HCT116 (cell line): ENCODE measurements at regions of chr6 and their contacts with region 1.

Region 1: GRCh38 chr6:44431118-44431725 is 43.7 kb downstream of the CDC5L start:
- DNase-seq: peak; percentile 45
- ATAC-seq: peak; percentile 82
- H3K4me3 ChIP-seq: no peak overlapping the region
- H3K27ac ChIP-seq: no peak overlapping the region
- H3K4me1 ChIP-seq: peaks cover 3% of the 10 kb centered on the region in 2 experiments; a peak in 1 of 4 replicates
- H3K27me3 ChIP-seq: no peaks in the 10 kb centered on the region
- CTCF ChIP-seq: peak; percentile 51 to 78 (median 64); a peak in 5 of 6 replicates
- POLR2A ChIP-seq: no peak
- RAD21 ChIP-seq: peak; percentile 73

Region 2: DNA sequence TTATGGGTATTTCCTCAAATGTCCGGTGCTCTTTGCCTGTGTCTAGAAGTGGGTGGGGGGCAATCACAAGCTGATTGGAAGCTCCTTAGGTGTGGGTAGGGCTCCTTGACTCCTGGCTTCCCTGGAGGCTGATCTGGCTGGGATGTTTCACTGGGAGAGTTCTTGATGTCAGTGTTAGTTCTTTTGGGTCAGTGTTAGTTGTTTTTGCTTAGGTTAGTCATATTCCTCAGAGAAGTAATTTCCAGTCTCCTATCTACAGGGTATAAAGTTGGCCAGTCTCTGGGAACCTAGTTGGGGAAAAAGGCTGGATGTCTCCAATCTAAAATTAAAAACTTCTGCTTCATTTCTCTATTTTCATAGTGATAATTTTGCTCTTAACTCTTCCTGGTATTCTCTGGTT is 20.1 kb before region 1 on chr6:
- CTCF ChIA-PET with region 1: no interaction called
- POLR2A ChIA-PET with region 1: no interaction called
- RAD21 ChIA-PET with region 1: no interaction called
- intact Hi-C with region 1: no loop called
- DNase-seq: no peak
- ATAC-seq: no peak
- H3K4me3 ChIP-seq: no peak overlapping the region
- H3K27ac ChIP-seq: no peak overlapping the region
- H3K4me1 ChIP-seq: peaks cover 2 to 16% of the 10 kb centered on the region in 2 experiments; a peak in 2 of 4 replicates
- H3K27me3 ChIP-seq: no peaks in the 10 kb centered on the region
- CTCF ChIP-seq: no peak
- POLR2A ChIP-seq: no peak
- RAD21 ChIP-seq: no peak

Region 3: DNA sequence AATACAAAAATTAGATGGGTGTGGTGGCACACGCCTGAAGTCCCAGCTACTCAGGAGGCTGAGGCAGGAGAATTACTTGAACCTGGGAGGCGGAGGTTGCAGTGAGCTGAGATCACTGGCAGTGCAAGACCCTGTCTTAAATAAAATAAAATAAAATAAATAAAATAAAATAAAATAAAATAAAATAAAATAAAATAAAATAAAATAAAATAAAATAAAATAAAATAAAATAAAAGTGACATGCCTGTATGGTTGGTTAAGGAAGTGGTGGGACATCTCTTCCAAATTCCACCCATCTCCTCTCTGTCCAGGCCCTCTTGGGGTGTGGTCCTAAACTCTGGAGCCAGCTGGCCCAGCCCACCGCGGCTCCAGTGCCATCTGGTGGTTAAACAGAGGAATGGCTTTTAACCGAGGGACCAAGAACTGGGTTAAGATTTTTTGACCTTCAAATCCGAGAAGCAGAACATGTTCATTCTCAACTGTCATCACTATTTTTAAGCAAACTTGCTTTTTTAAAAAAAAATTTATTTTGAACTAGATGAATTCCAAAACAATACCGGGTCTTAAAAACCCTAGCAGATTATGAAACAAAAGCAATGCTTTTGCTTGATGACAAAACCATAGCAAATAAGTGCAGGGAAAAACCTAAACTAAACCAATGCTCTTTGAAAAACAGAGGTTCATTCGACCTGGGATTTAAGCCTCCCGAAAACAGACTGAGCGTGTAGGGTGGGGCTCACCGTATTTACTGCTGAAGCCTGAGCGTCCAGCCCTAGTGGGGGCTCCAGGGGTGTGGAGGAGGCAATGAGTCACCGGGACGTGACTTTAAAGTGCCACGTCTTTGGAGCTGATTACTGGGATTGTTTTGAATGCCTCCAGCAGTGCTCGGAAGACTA is 25.1 kb after region 1 on chr6:
- CTCF ChIA-PET with region 1: interaction called, 13 read pairs
- POLR2A ChIA-PET with region 1: no interaction called
- RAD21 ChIA-PET with region 1: interaction called, 3 read pairs
- intact Hi-C with region 1: loop called (anchors 1 kb)
- DNase-seq: peak; percentile 41
- ATAC-seq: peak; percentile 90
- H3K4me3 ChIP-seq: peak overlapping the region; percentile 21 to 44; a peak in 3 of 4 replicates
- H3K27ac ChIP-seq: no peak overlapping the region
- H3K4me1 ChIP-seq: peaks cover 8 to 15% of the 10 kb centered on the region in 2 experiments; a peak in 3 of 4 replicates
- H3K27me3 ChIP-seq: no peaks in the 10 kb centered on the region
- CTCF ChIP-seq: peak; percentile 71 to 89 (median 81)
- POLR2A ChIP-seq: no peak
- RAD21 ChIP-seq: peak; percentile 75

Region 4: GRCh38 chr6:44468835-44469234 is 37.6 kb after region 1 on chr6:
- CTCF ChIA-PET with region 1: interaction called, 6 read pairs
- POLR2A ChIA-PET with region 1: no interaction called
- RAD21 ChIA-PET with region 1: no interaction called
- intact Hi-C with region 1: loop called (anchors 1 kb)
- DNase-seq: no peak
- ATAC-seq: no peak
- H3K4me3 ChIP-seq: no peak overlapping the region
- H3K27ac ChIP-seq: no peak overlapping the region
- H3K4me1 ChIP-seq: peaks cover 3 to 9% of the 10 kb centered on the region in 2 experiments; a peak in 2 of 4 replicates
- H3K27me3 ChIP-seq: no peaks in the 10 kb centered on the region
- CTCF ChIP-seq: no peak
- POLR2A ChIP-seq: no peak
- RAD21 ChIP-seq: no peak